ENCODE measurements at regions of chr18 and their contacts with region 1.

Region 1: GRCh38 chr18:48428475-48429177 is 19.4 kb upstream of the ZBTB7C start:
- DNase-seq: no peak
- H3K4me3 ChIP-seq: no peak overlapping the region
- H3K27ac ChIP-seq: no peak overlapping the region
- H3K27me3 ChIP-seq: peaks cover 32% of the 10 kb centered on the region
- CTCF ChIP-seq: no peak

Region 2: GRCh38 chr18:48455555-48456478 is 27.2 kb after region 1 on chr18:
- CTCF ChIA-PET with region 1: interaction called, 10 read pairs
- POLR2A ChIA-PET with region 1: interaction called, 5 read pairs
- DNase-seq: peak; percentile 50
- H3K4me3 ChIP-seq: no peak overlapping the region
- H3K27ac ChIP-seq: no peak overlapping the region
- H3K27me3 ChIP-seq: peaks cover 52% of the 10 kb centered on the region
- CTCF ChIP-seq: no peak

Region 3: GRCh38 chr18:48622911-48623431 is 194.3 kb after region 1 on chr18:
- CTCF ChIA-PET with region 1: no interaction called
- POLR2A ChIA-PET with region 1: interaction called, 13 read pairs
- DNase-seq: no peak
- H3K4me3 ChIP-seq: no peak overlapping the region
- H3K27ac ChIP-seq: peak overlapping the region; percentile 95
- H3K27me3 ChIP-seq: no peaks in the 10 kb centered on the region
- CTCF ChIP-seq: no peak